ENCODE measurements at regions of chr12 and their contacts with region 1.

Region 1: DNA sequence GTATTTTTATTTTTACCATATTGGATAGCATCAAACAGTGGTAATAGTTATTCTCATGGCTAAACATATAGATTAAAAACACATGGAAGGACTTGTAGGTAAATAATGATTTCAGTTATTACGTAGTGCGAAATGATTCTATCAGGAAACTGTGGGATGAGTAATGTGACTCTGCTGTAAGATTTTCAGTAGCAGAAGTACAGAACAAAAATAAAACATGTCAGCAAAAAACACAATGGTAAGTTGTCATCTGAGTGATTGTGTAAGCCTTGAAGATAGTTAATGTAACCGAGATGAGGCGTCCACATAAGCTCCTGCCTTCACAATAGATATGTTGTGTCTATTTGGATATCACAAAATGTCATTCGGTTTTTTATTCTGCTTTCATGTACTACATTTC is 99.8 kb downstream of the BORCS5 start:
- DNase-seq: peak in 2 of 3 donors; percentile 10 to 22
- H3K4me3 ChIP-seq: no peak overlapping the region
- H3K27ac ChIP-seq: no peak overlapping the region
- H3K4me1 ChIP-seq: peaks cover 0 to 2% (median 0%) of the 10 kb centered on the region in 4 experiments
- H3K27me3 ChIP-seq: no peaks in the 10 kb centered on the region

Region 2: DNA sequence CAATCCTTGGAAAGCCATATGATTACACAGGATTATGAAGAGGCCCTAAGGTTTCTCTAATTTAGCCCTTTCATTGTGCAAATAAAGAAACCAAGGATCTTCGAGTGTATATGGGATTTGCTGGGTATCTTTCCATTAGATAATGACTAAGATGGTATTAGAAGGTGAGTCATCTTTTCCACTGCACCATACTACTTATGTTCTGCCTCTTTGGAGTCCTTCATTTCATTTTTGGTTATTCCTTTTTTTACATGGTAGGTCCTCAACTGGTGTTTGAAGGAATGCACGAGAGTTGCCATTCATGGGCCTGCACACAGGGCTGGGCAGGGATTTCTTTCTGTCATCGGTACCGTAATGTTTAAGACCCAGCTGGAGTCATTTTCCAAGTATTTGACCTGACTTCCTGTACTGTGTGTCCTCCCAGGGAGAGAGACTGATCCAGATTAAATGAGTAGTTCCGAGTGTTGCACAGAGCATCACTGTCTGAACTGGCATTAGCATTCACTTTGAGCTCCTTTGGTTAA is 14.0 kb before region 1 on chr12:
- CTCF ChIA-PET with region 1: interaction called, 10 read pairs
- POLR2A ChIA-PET with region 1: interaction called, 3 read pairs
- DNase-seq: peak in 2 of 3 donors; percentile 50 to 57
- H3K4me3 ChIP-seq: no peak overlapping the region
- H3K27ac ChIP-seq: peak overlapping the region in 1 of 2 experiments; percentile 71
- H3K4me1 ChIP-seq: peaks cover 0 to 19% (median 16%) of the 10 kb centered on the region in 4 experiments
- H3K27me3 ChIP-seq: no peaks in the 10 kb centered on the region